CD4-positive, alpha-beta memory T cell (primary cell): ENCODE measurements at regions of chr17 and their contacts with region 1.

Region 1: GRCh38 chr17:20121359-20122253 is 112.4 kb downstream of the SPECC1 start:
- DNase-seq: peak; percentile 51 to 64 (median 58)
- H3K4me3 ChIP-seq: no peak overlapping the region
- H3K4me3 Mint-ChIP-seq: no peak overlapping the region
- H3K27ac ChIP-seq: no peak overlapping the region
- H3K27ac Mint-ChIP-seq: no peak overlapping the region
- H3K4me1 ChIP-seq: no peaks in the 10 kb centered on the region
- H3K4me1 Mint-ChIP-seq: peaks cover 2 to 5% (median 3%) of the 10 kb centered on the region in 4 donors
- H3K27me3 ChIP-seq: no peaks in the 10 kb centered on the region
- H3K27me3 Mint-ChIP-seq: peaks cover 3 to 5% of the 10 kb centered on the region in 2 donors

Region 2: DNA sequence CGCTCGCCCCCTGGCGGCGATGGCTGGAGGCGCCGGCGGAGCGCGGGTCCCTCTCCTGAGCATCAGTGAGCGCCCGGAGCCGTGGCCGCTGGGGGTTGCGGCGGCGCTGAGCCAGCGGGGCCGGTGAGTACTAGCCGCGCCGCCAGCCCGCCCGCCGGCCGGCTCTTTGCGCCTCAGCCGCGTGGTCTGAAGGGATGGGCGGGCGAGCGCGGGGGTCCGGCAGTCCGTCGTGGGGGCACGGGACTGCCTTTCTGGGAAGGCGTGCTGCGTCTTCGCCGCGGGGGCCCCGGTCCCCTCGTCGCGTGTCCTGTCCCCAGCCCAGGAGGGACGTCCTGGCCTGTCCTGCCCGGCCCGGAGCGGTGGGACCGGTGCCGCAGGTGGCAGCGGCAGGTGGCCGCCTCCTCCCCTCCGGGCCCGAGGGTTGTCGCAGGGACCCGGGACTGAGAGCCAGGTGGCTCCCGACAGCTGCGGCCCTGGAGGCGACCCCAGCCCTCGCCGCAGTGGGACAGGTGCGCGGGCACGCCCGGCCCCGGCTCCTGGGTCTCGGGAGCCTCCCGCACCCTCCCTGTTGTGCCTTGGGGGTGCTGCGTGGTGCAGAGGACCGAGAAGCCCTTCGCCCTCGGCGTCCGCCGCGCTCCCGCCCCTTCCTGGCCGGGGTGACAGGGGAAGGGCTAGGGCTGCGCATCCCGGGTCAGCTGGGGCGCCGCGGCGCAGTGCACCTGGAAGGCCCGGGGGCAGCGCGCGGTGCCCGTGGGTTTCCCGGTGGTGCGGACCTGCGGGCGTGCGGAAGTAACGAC is 112.1 kb before region 1 on chr17 and contains the start of gene SPECC1:
- CTCF ChIA-PET with region 1: interaction called, 9 read pairs
- POLR2A ChIA-PET with region 1: no interaction called
- intact Hi-C with region 1: loop called (anchors 5 kb)
- DNase-seq: peak; percentile 78 to 91 (median 85)
- H3K4me3 ChIP-seq: peak within 1 kb of the TSS; percentile 65 to 66
- H3K4me3 Mint-ChIP-seq: peak within 1 kb of the TSS; percentile 91 to 98 (median 93)
- H3K27ac ChIP-seq: peak within 1 kb of the TSS; percentile 33
- H3K27ac Mint-ChIP-seq: peak within 1 kb of the TSS; percentile 29 to 92 (median 84)
- H3K4me1 ChIP-seq: peaks cover 14% of the 10 kb centered on the region
- H3K4me1 Mint-ChIP-seq: peaks cover 9 to 17% (median 10%) of the 10 kb centered on the region in 4 donors
- H3K27me3 ChIP-seq: peaks cover 7% of the 10 kb centered on the region
- H3K27me3 Mint-ChIP-seq: peaks cover 19 to 24% of the 10 kb centered on the region in 2 donors
- total RNA-seq, gene SPECC1: 12.8 to 13.4 TPM

Region 3: GRCh38 chr17:20226814-20227482 is 105.3 kb after region 1 on chr17:
- CTCF ChIA-PET with region 1: interaction called, 29 read pairs
- POLR2A ChIA-PET with region 1: no interaction called
- intact Hi-C with region 1: loop called (anchors 1 kb)
- DNase-seq: peak; percentile 60 to 69 (median 67)
- H3K4me3 ChIP-seq: no peak overlapping the region
- H3K4me3 Mint-ChIP-seq: no peak overlapping the region
- H3K27ac ChIP-seq: no peak overlapping the region
- H3K27ac Mint-ChIP-seq: peak overlapping the region in 1 of 7 donors; percentile 23
- H3K4me1 ChIP-seq: no peaks in the 10 kb centered on the region
- H3K4me1 Mint-ChIP-seq: peaks cover 5 to 8% (median 6%) of the 10 kb centered on the region in 4 donors
- H3K27me3 ChIP-seq: no peaks in the 10 kb centered on the region
- H3K27me3 Mint-ChIP-seq: no peaks in the 10 kb centered on the region

Region 4: DNA sequence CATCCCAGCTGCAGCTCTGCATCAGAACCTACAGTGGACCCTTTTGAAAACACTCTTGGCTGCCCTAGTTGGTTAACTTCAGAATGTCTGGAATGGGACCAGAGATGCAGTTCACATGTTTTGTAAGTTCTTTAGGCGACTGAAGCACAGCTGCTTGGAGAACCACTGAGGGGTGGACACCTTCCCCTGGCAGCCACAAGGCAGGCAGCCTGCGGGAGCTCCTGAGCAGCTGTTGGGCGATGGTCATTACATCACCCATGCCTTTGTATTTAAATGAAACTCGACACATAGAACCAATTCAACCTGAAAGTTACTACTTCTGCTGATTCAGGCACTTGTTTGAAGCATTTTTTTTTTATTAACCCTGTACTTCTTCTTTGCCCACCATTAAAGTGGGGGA is 194.2 kb after region 1 on chr17:
- CTCF ChIA-PET with region 1: interaction called, 12 read pairs
- POLR2A ChIA-PET with region 1: no interaction called
- intact Hi-C with region 1: loop called (anchors 1 kb)
- DNase-seq: no peak
- H3K4me3 ChIP-seq: no peak overlapping the region
- H3K4me3 Mint-ChIP-seq: no peak overlapping the region
- H3K27ac ChIP-seq: no peak overlapping the region
- H3K27ac Mint-ChIP-seq: no peak overlapping the region
- H3K4me1 ChIP-seq: no peaks in the 10 kb centered on the region
- H3K4me1 Mint-ChIP-seq: peaks cover 0 to under 1% (median 0%) of the 10 kb centered on the region in 4 donors
- H3K27me3 ChIP-seq: no peaks in the 10 kb centered on the region
- H3K27me3 Mint-ChIP-seq: no peaks in the 10 kb centered on the region

Region 5: GRCh38 chr17:20992987-20993862 is 871.6 kb after region 1 on chr17:
- CTCF ChIA-PET with region 1: interaction called, 3 read pairs
- POLR2A ChIA-PET with region 1: no interaction called
- intact Hi-C with region 1: loop called (anchors 5 kb)
- DNase-seq: peak; percentile 52 to 66 (median 57)
- H3K4me3 ChIP-seq: no peak overlapping the region
- H3K4me3 Mint-ChIP-seq: peak overlapping the region in 1 of 8 donors; percentile 10
- H3K27ac ChIP-seq: no peak overlapping the region
- H3K27ac Mint-ChIP-seq: peak overlapping the region in 2 of 7 donors; percentile 17 to 46
- H3K4me1 ChIP-seq: no peaks in the 10 kb centered on the region
- H3K4me1 Mint-ChIP-seq: peaks cover 0 to 5% (median 2%) of the 10 kb centered on the region in 4 donors
- H3K27me3 ChIP-seq: no peaks in the 10 kb centered on the region
- H3K27me3 Mint-ChIP-seq: no peaks in the 10 kb centered on the region